Sciatic nerve (tissue), 2 donors: ENCODE measurements at regions of chr19 and their contacts with region 1.

Region 1: DNA sequence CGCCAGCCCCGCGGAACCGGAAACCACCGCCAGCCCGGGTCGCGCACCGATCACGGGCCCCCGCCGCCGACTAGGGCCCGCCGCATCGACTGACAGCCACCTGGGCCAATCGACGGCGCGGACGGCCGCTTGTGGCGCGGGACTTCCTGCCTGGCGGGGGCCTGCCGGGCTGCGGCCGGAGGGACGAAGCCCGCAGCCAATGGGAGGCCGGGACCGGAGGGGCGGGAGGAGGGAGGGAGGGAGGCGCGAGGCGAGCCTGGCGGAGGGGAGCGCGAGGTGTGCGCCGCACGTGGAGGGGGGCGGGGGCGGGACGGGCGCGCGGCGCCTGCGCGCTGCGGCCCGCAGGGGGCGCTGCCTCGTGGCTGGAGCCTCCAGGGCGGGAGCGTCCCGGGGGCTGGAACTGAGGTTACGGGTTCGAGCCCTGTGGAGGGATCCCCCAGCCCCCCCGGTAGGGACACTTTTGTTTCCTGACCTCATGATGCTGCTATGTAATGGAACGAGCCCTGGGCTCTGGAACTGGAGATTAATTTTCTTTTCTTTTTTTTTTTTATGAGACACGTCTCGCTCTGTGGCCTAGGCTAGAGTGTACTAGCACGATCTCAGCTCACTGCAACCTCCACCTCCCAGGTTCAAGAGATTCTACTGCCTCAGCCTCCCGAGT is at the start of gene MLLT1:
- DNase-seq: peak; percentile 99
- ATAC-seq: peak; percentile 98
- total RNA-seq, gene MLLT1: 72.5 TPM

Region 2: DNA sequence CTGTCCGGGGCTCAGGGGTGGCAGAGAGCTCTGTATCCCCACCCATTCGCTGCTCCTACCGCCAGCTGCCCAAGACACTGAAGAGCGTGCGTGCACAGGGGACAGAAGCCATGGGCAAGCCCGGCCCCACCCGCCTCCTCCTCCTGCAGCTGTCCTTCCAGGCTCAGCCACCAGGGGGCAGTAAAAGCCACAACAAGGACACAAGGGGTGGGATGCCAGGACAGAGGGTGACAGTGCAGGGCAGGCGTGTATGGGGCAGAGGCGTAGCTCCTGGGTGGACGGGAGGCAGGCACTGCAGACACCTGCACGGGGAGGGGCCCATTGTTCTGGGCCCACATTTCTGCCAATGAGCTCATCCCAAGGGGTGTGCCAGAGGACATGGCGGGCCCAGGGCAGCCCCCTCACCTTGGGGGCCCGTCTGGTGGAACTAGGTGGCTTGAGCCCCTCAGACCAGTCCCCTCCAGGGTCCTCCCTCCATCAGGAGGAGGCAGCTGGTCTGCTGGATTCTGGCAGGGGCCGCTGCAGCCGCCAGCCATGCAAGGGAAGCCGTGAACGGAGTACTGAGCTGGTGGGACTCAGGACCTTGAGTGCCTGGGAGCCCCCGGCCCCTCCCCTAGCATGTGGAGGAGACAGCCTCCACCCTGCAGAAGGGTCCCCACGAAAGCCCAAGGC is 61.4 kb before region 1 on chr19:
- intact Hi-C with region 1: loop called (anchors 5 kb)
- DNase-seq: peak; percentile 96
- ATAC-seq: peak; percentile 83